Naive thymus-derived CD4-positive, alpha-beta T cell (primary cell): ENCODE measurements at regions of chr10 and their contacts with region 1.

Region 1: GRCh38 chr10:73956476-73957359 is 41.2 kb upstream of the VCL start:
- DNase-seq: peak in 8 of 9 donors; percentile 34 to 61 (median 46)
- ATAC-seq: peak; percentile 81
- H3K4me3 ChIP-seq: peak overlapping the region; percentile 28
- H3K4me3 Mint-ChIP-seq: peak overlapping the region; percentile 63 to 86 (median 76)
- H3K27ac ChIP-seq: peak overlapping the region; percentile 56
- H3K27ac Mint-ChIP-seq: peak overlapping the region; percentile 58 to 94 (median 87)
- H3K4me1 ChIP-seq: peaks cover 31 to 41% of the 10 kb centered on the region in 2 donors
- H3K4me1 Mint-ChIP-seq: peaks cover 26 to 57% (median 52%) of the 10 kb centered on the region in 7 donors
- H3K27me3 ChIP-seq: no peaks in the 10 kb centered on the region
- H3K27me3 Mint-ChIP-seq: peaks cover 0 to 4% (median 0%) of the 10 kb centered on the region in 5 donors

Region 2: GRCh38 chr10:73879296-73880173 is 77.2 kb before region 1 on chr10:
- CTCF ChIA-PET with region 1: interaction called, 11 read pairs
- POLR2A ChIA-PET with region 1: no interaction called
- intact Hi-C with region 1: no loop called
- DNase-seq: peak; percentile 91 to 98 (median 96)
- ATAC-seq: peak; percentile 97
- H3K4me3 ChIP-seq: no peak overlapping the region
- H3K4me3 Mint-ChIP-seq: peak overlapping the region in 5 of 10 donors; percentile 0 to 40 (median 1)
- H3K27ac ChIP-seq: peak overlapping the region; percentile 68
- H3K27ac Mint-ChIP-seq: peak overlapping the region; percentile 30 to 98 (median 89)
- H3K4me1 ChIP-seq: peaks cover 18 to 22% of the 10 kb centered on the region in 2 donors
- H3K4me1 Mint-ChIP-seq: peaks cover 14 to 51% (median 41%) of the 10 kb centered on the region in 7 donors
- H3K27me3 ChIP-seq: no peaks in the 10 kb centered on the region
- H3K27me3 Mint-ChIP-seq: peaks cover 0 to 5% (median 0%) of the 10 kb centered on the region in 5 donors

Region 3: DNA sequence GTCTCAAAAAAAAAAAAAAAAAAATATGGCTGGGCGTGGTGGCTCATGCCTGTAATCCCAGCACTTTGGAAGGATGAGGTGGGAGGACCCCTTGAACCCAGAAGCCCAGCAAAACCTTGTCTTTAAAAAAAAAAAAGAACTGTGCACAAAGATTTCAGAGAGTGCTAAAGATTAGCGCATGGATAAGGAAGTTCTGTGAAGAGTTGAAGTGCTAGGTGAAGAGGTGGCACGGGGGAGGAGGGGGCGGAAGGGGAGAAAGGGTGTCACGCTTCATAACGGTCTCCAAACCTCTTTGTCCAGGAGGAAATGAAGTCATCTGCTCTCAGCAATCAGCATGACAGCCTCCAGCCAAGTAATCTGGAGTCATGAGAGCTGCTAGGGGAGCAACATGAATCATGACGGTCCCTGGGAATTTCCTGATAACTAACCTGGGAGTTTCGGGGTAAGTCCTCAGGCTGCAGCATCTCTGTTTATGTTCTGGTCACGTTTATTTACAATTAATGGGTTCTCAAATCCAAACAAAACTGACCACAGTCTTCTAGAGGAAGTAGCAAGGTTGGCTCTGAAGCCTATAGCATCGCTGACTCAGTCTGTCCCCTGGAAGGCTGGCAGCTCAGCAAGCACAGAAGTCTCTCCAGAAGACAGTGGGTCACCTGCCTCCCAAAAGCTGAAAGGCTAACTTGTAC is 47.7 kb before region 1 on chr10:
- CTCF ChIA-PET with region 1: no interaction called
- POLR2A ChIA-PET with region 1: no interaction called
- intact Hi-C with region 1: loop called in 1 of 2 experiments (anchors 2 kb)
- DNase-seq: peak in 3 of 9 donors; percentile 20 to 59 (median 21)
- ATAC-seq: peak; percentile 68
- H3K4me3 ChIP-seq: no peak overlapping the region
- H3K4me3 Mint-ChIP-seq: peak overlapping the region in 7 of 10 donors; percentile 7 to 69 (median 37)
- H3K27ac ChIP-seq: no peak overlapping the region
- H3K27ac Mint-ChIP-seq: peak overlapping the region in 1 of 9 donors; percentile 14
- H3K4me1 ChIP-seq: peaks cover 14 to 15% of the 10 kb centered on the region in 2 donors
- H3K4me1 Mint-ChIP-seq: peaks cover 15 to 46% (median 30%) of the 10 kb centered on the region in 7 donors
- H3K27me3 ChIP-seq: peaks cover 10 to 21% of the 10 kb centered on the region in 2 donors
- H3K27me3 Mint-ChIP-seq: peaks cover 49 to 70% (median 61%) of the 10 kb centered on the region in 5 donors

Region 4: GRCh38 chr10:73940634-73941221 is 16.0 kb before region 1 on chr10:
- CTCF ChIA-PET with region 1: interaction called, 24 read pairs
- POLR2A ChIA-PET with region 1: interaction called, 5 read pairs
- intact Hi-C with region 1: no loop called
- DNase-seq: peak; percentile 61 to 89 (median 79)
- ATAC-seq: peak; percentile 99
- H3K4me3 ChIP-seq: no peak overlapping the region
- H3K4me3 Mint-ChIP-seq: peak overlapping the region in 7 of 10 donors; percentile 0 to 51 (median 42)
- H3K27ac ChIP-seq: no peak overlapping the region
- H3K27ac Mint-ChIP-seq: peak overlapping the region in 2 of 9 donors; percentile 71 to 80
- H3K4me1 ChIP-seq: peaks cover 0 to 6% of the 10 kb centered on the region in 2 donors
- H3K4me1 Mint-ChIP-seq: peaks cover 0 to 17% (median 7%) of the 10 kb centered on the region in 7 donors
- H3K27me3 ChIP-seq: no peaks in the 10 kb centered on the region
- H3K27me3 Mint-ChIP-seq: peaks cover 0 to 24% (median 0%) of the 10 kb centered on the region in 5 donors

Region 5: GRCh38 chr10:73991884-73992245 is 35.1 kb after region 1 on chr10:
- CTCF ChIA-PET with region 1: interaction called, 5 read pairs
- POLR2A ChIA-PET with region 1: interaction called, 8 read pairs
- intact Hi-C with region 1: loop called (anchors 1 kb)
- DNase-seq: peak; percentile 31 to 87 (median 79)
- ATAC-seq: peak; percentile 100
- H3K4me3 ChIP-seq: no peak overlapping the region
- H3K4me3 Mint-ChIP-seq: peak overlapping the region; percentile 1 to 72 (median 60)
- H3K27ac ChIP-seq: no peak overlapping the region
- H3K27ac Mint-ChIP-seq: peak overlapping the region; percentile 11 to 88 (median 82)
- H3K4me1 ChIP-seq: peaks cover 20 to 21% of the 10 kb centered on the region in 2 donors
- H3K4me1 Mint-ChIP-seq: peaks cover 26 to 59% (median 42%) of the 10 kb centered on the region in 7 donors
- H3K27me3 ChIP-seq: no peaks in the 10 kb centered on the region
- H3K27me3 Mint-ChIP-seq: no peaks in the 10 kb centered on the region

Region 6: GRCh38 chr10:74058658-74059057 is 101.9 kb after region 1 on chr10:
- CTCF ChIA-PET with region 1: interaction called, 3 read pairs
- POLR2A ChIA-PET with region 1: interaction called, 3 read pairs
- intact Hi-C with region 1: loop called in 1 of 2 experiments (anchors 5 kb)
- DNase-seq: peak in 7 of 9 donors; percentile 12 to 60 (median 29)
- ATAC-seq: peak; percentile 70
- H3K4me3 ChIP-seq: no peak overlapping the region
- H3K4me3 Mint-ChIP-seq: peak overlapping the region in 7 of 10 donors; percentile 1 to 76 (median 8)
- H3K27ac ChIP-seq: no peak overlapping the region
- H3K27ac Mint-ChIP-seq: peak overlapping the region in 5 of 9 donors; percentile 4 to 52 (median 12)
- H3K4me1 ChIP-seq: peaks cover 10 to 15% of the 10 kb centered on the region in 2 donors
- H3K4me1 Mint-ChIP-seq: peaks cover 18 to 44% (median 26%) of the 10 kb centered on the region in 7 donors
- H3K27me3 ChIP-seq: no peaks in the 10 kb centered on the region
- H3K27me3 Mint-ChIP-seq: no peaks in the 10 kb centered on the region